B cell (primary cell): ENCODE measurements at regions of chr5 and their contacts with region 1.

Region 1: DNA sequence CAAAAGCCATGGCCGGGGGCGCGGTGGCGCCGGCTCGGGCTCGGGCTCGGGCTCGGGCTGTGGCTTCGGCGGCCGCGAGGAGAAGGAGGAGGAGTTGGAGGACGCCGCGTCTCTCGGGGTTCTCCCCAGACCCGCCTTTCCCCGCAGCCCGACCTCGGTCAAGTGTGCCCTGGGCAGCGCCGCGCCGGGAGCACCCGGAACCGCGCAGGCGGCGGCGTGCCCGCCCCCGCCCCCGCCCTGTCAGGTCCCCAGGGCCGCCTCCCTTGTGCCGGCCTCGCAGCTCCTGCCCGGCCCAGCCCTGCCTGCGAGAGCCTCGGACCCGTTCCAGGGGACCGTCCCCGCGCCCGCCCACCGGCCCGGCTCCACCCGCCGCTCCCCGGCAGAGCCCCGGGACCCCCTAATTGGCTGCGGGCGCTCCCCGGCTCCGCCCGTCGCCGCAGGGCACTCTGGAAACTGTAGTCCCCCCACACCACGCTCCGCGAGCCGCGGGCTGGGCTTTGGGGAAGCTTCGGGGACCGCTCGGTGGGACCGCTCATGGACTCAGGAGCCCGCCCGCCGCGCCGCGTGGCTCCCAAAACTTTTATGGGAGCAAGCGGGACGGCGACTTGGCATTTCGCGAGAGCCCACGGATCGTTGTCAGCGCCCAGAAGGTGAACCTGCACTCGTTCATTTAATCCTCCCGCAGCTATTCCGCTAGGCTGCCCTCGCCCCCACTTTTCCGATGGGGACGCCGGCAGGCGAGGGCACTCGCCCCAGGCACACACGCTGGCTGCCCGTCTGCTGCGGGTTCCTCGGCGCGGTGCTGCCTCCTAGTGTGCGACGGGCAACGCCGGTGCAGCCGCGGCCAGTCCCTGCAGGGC is at the start of gene STK10:
- DNase-seq: peak; percentile 94
- ATAC-seq: peak; percentile 81
- H3K4me3 ChIP-seq: peak within 1 kb of the TSS; percentile 88 to 99 (median 98)
- H3K4me3 Mint-ChIP-seq: peak within 1 kb of the TSS; percentile 100
- H3K27ac ChIP-seq: peak within 1 kb of the TSS; percentile 74 to 89
- H3K27ac Mint-ChIP-seq: peak within 1 kb of the TSS; percentile 99
- H3K4me1 ChIP-seq: peaks cover 35 to 48% of the 10 kb centered on the region in 2 donors
- H3K4me1 Mint-ChIP-seq: peaks cover 39% of the 10 kb centered on the region
- H3K27me3 ChIP-seq: no peaks in the 10 kb centered on the region
- H3K27me3 Mint-ChIP-seq: no peaks in the 10 kb centered on the region
- CTCF ChIP-seq: peak; percentile 87
- total RNA-seq, gene STK10: 253 and 261 TPM in 2 replicates

Region 2: DNA sequence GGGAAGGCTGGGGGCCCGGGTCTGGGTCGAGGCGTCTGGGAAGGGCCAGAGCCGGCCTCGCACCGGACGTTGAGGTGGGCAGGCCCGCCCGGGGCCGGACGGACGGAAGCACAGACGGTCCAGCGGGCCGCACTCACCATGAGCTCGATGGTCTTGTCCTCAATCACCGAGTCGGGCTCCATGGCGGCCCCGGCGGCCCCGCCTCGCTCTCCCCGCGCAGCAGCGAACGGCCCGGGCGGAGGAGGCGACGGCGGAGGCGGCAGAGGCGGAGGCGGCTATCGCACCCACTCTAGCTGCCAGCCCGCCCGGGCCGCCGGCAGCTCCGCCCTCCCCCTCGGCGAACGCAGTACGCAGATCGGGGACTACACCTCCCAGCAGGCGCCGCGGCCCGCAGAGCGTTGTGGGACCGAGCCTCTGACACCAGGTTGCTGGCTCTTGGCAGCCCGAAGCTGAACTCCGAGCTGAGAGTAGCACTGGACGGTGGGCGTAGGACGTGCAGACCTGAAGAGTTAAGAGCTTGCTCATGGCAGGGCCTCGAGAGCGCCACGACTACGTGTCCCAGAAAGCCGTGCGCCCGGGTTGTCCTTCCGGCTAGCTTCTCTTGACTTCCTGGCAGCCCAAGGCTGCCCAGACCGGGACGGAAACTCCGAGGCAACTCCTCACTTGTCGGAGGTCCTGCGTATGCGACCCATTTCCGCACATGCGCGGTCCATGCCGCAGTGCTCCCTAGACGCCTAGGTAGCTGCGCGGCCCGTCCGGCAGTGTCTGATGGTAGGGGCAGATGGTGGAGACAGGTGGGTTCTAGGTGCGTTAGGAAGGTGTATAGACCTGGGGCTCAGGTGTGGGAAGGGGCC is 181.7 kb before region 1 on chr5 and contains the start of gene FBXW11:
- CTCF ChIA-PET with region 1: interaction called, 9 read pairs
- POLR2A ChIA-PET with region 1: interaction called, 7 read pairs
- intact Hi-C with region 1: loop called (anchors 1 kb)
- DNase-seq: peak; percentile 97
- ATAC-seq: peak; percentile 85
- H3K4me3 ChIP-seq: peak within 1 kb of the TSS; percentile 77 to 94 (median 90)
- H3K4me3 Mint-ChIP-seq: peak within 1 kb of the TSS; percentile 92
- H3K27ac ChIP-seq: peak within 1 kb of the TSS; percentile 96 to 97
- H3K27ac Mint-ChIP-seq: peak within 1 kb of the TSS; percentile 93
- H3K4me1 ChIP-seq: peaks cover 44 to 47% of the 10 kb centered on the region in 2 donors
- H3K4me1 Mint-ChIP-seq: peaks cover 49% of the 10 kb centered on the region
- H3K27me3 ChIP-seq: no peaks in the 10 kb centered on the region
- H3K27me3 Mint-ChIP-seq: no peaks in the 10 kb centered on the region
- CTCF ChIP-seq: no peak
- total RNA-seq, gene FBXW11: 62.4 and 64.8 TPM in 2 replicates

Region 3: GRCh38 chr5:172106511-172107356 is 81.5 kb before region 1 on chr5:
- CTCF ChIA-PET with region 1: interaction called, 245 read pairs
- POLR2A ChIA-PET with region 1: interaction called, 43 read pairs
- intact Hi-C with region 1: loop called (anchors 1 kb)
- DNase-seq: peak; percentile 76
- ATAC-seq: no peak
- H3K4me3 ChIP-seq: no peak overlapping the region
- H3K4me3 Mint-ChIP-seq: no peak overlapping the region
- H3K27ac ChIP-seq: peak overlapping the region in 1 of 2 donors; percentile 41
- H3K27ac Mint-ChIP-seq: peak overlapping the region; percentile 70
- H3K4me1 ChIP-seq: peaks cover 31 to 40% of the 10 kb centered on the region in 2 donors
- H3K4me1 Mint-ChIP-seq: peaks cover 35% of the 10 kb centered on the region
- H3K27me3 ChIP-seq: no peaks in the 10 kb centered on the region
- H3K27me3 Mint-ChIP-seq: no peaks in the 10 kb centered on the region
- CTCF ChIP-seq: peak; percentile 92

Region 4: DNA sequence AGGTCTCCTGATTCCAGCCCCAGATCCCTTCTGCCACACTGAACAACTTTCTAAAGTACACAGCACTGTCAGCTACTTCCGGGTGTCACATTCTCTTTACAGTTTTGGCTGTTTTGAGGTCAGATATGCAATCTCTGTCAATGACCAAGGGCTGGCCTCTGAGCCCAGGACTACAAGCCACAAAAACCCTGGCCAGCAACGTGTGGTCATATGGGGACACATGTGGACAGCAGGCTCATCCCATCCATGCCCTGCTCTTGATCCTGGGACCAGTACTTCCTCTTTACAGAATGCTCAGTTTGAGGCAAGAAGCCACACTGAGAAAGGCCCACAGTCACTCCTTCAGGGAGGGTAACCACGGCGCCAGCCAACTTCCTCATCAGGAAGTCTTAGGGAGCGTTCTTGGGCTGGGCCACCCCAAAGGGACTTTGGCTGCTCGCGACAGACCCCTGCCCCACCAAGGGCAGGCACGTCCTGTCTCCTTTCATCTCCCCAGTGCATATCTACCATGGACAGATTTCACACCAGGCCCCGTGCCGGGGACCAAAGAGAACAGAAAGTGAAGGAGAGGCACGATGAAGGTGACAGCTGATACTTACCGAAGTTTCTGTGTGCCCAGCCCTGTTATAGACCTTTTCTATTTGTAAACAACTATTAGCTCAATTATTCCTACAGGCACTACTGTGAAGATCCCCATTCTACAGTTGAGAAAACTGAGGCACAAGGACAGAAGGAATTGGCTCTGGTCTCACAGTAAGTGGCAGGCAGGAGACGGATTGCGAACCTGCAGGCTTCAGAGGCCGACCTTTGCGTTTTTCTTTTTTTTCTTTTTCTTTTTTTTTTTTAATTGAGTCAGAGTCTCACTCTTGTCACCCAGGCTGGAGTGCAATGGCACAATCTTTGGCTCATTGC is 37.5 kb before region 1 on chr5:
- CTCF ChIA-PET with region 1: interaction called, 7 read pairs
- POLR2A ChIA-PET with region 1: no interaction called
- intact Hi-C with region 1: loop called (anchors 2 kb)
- DNase-seq: peak; percentile 60
- ATAC-seq: peak; percentile 66
- H3K4me3 ChIP-seq: peak overlapping the region in 2 of 5 experiments; percentile 19 to 23
- H3K4me3 Mint-ChIP-seq: peak overlapping the region; percentile 75
- H3K27ac ChIP-seq: peak overlapping the region; percentile 61 to 75
- H3K27ac Mint-ChIP-seq: peak overlapping the region; percentile 83
- H3K4me1 ChIP-seq: peaks cover 26 to 43% of the 10 kb centered on the region in 2 donors
- H3K4me1 Mint-ChIP-seq: peaks cover 64% of the 10 kb centered on the region
- H3K27me3 ChIP-seq: no peaks in the 10 kb centered on the region
- H3K27me3 Mint-ChIP-seq: no peaks in the 10 kb centered on the region
- CTCF ChIP-seq: no peak

Region 5: GRCh38 chr5:172293054-172293744 is 104.9 kb after region 1 on chr5:
- CTCF ChIA-PET with region 1: interaction called, 12 read pairs
- POLR2A ChIA-PET with region 1: no interaction called
- intact Hi-C with region 1: loop called (anchors 1 kb)
- DNase-seq: peak; percentile 71
- ATAC-seq: peak; percentile 99
- H3K4me3 ChIP-seq: no peak overlapping the region
- H3K4me3 Mint-ChIP-seq: no peak overlapping the region
- H3K27ac ChIP-seq: no peak overlapping the region
- H3K27ac Mint-ChIP-seq: no peak overlapping the region
- H3K4me1 ChIP-seq: no peaks in the 10 kb centered on the region
- H3K4me1 Mint-ChIP-seq: peaks cover 3% of the 10 kb centered on the region
- H3K27me3 ChIP-seq: no peaks in the 10 kb centered on the region
- H3K27me3 Mint-ChIP-seq: peaks cover 8% of the 10 kb centered on the region
- CTCF ChIP-seq: peak; percentile 85